Mucosa of descending colon (tissue), 3 donors: ENCODE measurements at regions of chr2 and their contacts with region 1.

Region 1: GRCh38 chr2:63849381-63850203 is 7.9 kb downstream of the UGP2 start:
- DNase-seq: no peak
- ATAC-seq: no peak
- H3K4me3 ChIP-seq: no peak overlapping the region
- H3K4me1 ChIP-seq: peaks cover 43% of the 10 kb centered on the region
- CTCF ChIP-seq: no peak

Region 2: DNA sequence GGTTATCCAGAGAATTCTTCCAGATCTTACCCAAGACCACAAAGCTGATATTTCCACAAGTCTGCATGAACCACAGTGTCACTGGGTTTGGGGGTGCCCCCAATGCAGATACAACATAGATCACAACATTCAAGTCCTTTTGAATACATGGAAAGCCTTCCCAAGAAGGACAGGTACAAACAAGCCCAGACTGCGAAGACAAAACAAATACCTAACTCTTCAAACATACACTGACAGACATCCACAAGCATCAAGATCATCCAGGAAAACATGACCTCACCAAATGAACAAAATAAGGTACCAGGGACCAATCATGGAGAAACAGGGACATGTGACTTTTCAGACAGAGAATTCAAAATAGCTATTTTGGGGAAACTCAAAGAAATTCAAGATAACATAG is 167.7 kb before region 1 on chr2:
- intact Hi-C with region 1: no loop called
- DNase-seq: no peak
- ATAC-seq: no peak
- H3K4me3 ChIP-seq: no peak overlapping the region
- H3K4me1 ChIP-seq: no peaks in the 10 kb centered on the region
- CTCF ChIP-seq: no peak

Region 3: GRCh38 chr2:63698825-63699548 is 150.6 kb before region 1 on chr2:
- intact Hi-C with region 1: loop called in 1 of 2 experiments (anchors 10 kb)
- DNase-seq: peak in 2 of 3 donors; percentile 37 to 57
- ATAC-seq: peak; percentile 96
- H3K4me3 ChIP-seq: no peak overlapping the region
- H3K4me1 ChIP-seq: peaks cover 3% of the 10 kb centered on the region
- CTCF ChIP-seq: peak; percentile 19

Region 4: DNA sequence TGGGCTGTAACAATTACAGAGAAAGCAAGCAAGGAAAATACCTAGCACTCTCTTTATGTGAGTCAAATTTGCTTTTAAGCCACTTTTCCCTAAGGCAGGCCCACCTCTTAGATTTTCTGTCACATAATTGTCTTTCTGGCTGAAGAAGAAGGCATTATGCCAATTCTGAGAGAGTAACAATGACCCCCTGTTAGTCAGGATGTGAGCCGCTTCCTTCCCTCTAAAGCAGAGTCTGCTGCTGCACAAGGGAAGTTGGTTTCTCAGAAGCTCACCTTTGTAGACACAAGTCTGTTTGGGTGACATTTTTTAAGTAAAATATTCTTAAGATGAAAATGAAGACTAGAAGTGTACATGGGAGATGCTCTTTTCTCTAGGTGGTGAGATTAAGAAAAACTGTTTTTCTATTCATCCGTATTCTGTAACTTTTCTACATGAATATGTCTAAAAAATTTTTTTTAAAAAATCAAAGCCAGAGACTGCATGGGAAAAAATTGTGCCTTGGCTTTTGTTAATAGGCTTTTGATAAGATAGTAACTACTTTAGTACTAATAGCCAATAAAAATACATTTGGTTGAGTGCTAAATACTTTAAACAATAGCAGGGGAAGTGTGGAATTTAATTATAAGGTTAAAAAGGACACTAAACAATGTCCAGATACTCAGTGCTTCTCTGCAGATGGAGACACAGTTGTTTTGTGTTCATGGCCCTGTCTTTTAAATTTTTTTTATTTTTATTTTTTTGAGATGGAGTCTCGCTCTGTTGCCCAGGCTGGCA is 203.1 kb after region 1 on chr2:
- intact Hi-C with region 1: no loop called
- DNase-seq: no peak
- ATAC-seq: no peak
- H3K4me3 ChIP-seq: no peak overlapping the region
- H3K4me1 ChIP-seq: peaks cover 5% of the 10 kb centered on the region
- CTCF ChIP-seq: no peak

Region 5: DNA sequence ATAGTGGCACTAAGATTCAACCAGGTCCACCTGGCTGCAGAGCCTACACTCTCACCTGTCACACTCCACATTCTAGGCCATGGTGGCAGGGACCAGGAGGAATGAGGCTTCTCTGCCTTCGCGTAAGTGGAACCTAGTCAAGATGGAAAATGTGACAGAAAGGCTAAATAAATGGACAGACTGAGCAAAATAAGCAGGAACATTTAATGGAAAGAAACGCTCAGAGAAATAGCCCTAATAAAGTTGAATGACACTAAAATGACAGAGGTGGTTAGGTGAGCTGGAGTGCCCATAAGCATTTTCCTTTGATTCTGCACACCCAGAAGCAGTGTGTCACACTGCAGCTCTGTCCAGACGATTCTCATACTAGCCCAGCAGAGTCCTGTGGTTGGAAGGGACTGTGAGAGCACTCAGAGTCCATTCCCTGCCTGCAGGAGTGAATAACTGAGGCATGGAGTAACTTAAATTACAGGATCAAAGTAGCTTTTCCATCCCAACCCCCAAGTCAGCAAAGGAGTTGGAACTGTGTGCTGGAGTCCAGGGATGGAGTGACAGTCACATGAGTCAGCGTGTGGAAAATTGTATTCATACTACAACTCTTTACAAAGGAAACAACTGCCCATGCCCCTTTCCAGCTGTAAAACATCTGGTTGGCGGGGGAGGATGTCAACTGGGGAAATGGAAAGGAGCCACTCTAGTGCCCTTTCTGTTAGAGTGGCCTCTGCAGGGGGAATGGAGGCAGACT is 499.0 kb after region 1 on chr2:
- intact Hi-C with region 1: no loop called
- DNase-seq: no peak
- ATAC-seq: peak; percentile 21
- H3K4me3 ChIP-seq: no peak overlapping the region
- H3K4me1 ChIP-seq: no peaks in the 10 kb centered on the region
- CTCF ChIP-seq: no peak